Mammary epithelial cell (primary cell): ENCODE measurements at regions of chr4 and their contacts with region 1.

Region 1: DNA sequence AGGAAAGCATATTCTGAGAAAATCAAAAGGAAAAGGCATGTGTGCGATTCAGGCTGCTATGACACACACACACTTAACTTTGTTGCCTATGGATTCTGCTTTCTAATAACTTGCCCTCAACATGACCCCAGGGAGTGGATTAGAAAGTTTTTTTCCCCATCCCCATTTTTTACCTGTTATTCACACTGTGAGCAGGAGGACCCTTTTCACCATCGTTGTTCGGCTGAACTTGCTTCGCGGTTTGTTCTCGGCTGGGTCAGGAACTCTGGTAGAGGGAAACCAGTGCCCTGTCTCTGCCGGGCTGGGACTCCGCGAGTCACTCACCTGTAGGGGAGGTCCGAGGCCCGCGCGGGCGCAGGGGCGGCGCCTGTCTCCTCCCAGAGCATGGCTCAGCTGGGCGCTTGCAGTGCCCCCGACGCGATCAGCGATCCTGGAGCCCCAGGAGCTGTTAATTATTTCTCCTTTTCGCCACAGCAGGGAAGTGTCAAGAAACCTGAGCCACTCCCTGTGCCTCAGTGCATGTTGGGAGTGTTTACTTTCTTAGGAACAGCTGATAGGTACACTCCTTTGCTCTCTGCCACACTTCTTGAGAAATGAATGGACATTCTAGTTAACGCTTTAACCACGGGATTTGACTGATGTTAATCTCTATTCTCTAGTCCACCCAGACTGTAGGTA is at the start of gene RASSF6:
- DNase-seq: peak; percentile 91
- H3K4me3 ChIP-seq: peak within 1 kb of the TSS; percentile 62 to 84 (median 68)
- H3K27ac ChIP-seq: peak within 1 kb of the TSS; percentile 77
- H3K4me1 ChIP-seq: peaks cover 35% of the 10 kb centered on the region
- H3K27me3 ChIP-seq: no peaks in the 10 kb centered on the region
- CTCF ChIP-seq: peak in 1 of 2 donors; percentile 25
- total RNA-seq, gene RASSF6: 35.3 to 84.2 TPM

Region 2: GRCh38 chr4:73468170-73468569 is 152.1 kb before region 1 on chr4:
- CTCF ChIA-PET with region 1: no interaction called
- dilution Hi-C with region 1: no loop called
- in situ Hi-C with region 1: no loop called
- intact Hi-C with region 1: no loop called
- DNase-seq: no peak
- H3K4me3 ChIP-seq: no peak overlapping the region
- H3K27ac ChIP-seq: no peak overlapping the region
- H3K4me1 ChIP-seq: no peaks in the 10 kb centered on the region
- H3K27me3 ChIP-seq: peaks cover 11% of the 10 kb centered on the region
- CTCF ChIP-seq: no peak

Region 3: DNA sequence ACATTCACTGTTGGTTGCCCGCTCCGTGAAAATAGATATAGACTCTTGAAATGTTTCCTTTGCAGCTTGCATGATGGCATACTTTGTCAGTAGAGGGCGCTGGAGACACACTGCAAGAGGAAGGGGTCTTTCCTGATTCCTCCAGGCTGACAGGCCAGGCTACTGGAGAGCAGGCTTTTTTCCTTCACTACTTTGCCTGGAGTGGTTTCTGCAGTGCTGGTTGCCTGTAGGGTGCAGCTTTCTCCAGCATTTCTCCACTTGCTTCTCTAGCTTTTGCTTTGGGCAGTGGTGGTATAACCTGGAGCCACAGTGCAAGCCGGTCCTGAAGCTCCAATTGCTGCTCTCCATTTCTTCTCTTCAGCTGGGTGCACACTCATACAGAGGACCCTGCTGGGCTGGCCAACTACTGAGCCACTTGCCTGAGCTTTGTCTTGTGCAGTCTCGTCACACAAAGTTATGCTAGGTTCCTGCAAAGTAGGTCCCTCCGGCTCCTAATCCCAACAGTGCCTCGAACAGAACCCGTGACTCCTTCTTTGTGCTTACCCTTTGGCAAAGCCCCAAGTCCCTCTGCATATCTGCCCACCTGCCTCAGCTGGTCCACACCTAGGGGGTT is 46.4 kb before region 1 on chr4:
- CTCF ChIA-PET with region 1: no interaction called
- dilution Hi-C with region 1: no loop called
- in situ Hi-C with region 1: no loop called
- intact Hi-C with region 1: loop called (anchors 1 kb)
- DNase-seq: peak; percentile 52
- H3K4me3 ChIP-seq: no peak overlapping the region
- H3K27ac ChIP-seq: no peak overlapping the region
- H3K4me1 ChIP-seq: peaks cover 5% of the 10 kb centered on the region
- H3K27me3 ChIP-seq: no peaks in the 10 kb centered on the region
- CTCF ChIP-seq: peak; percentile 89

Region 4: DNA sequence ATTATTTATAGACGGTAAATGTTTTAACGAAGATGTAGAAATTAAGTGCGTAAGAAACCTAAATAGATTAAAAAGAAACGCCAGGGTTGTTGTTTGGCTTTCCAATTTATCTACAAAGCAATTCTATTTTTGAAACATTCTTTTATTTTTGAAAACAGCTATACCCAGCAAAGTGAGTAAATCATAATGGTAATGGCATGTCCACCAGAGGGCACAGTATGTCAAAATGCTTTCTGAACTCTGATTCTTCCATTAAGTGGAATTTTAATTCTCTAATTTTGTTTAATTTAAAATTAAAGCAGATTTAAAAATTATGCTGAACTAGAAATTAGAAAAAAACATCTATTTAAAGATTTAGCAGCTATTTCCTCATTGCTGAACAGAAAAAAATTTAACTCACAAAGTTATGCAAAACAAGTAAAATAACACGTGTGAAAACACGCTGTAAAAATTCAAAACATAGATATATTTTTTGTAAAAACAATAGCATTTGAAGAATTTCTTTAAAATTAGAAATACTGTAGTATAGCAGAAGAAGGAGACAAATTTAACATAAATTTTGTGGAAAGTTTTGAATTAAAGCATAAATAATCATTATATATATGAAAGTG is 26.5 kb before region 1 on chr4:
- CTCF ChIA-PET with region 1: interaction called, 4 read pairs
- dilution Hi-C with region 1: no loop called
- in situ Hi-C with region 1: no loop called
- intact Hi-C with region 1: loop called (anchors 1 kb)
- DNase-seq: no peak
- H3K4me3 ChIP-seq: no peak overlapping the region
- H3K27ac ChIP-seq: no peak overlapping the region
- H3K4me1 ChIP-seq: peaks cover 26% of the 10 kb centered on the region
- H3K27me3 ChIP-seq: no peaks in the 10 kb centered on the region
- CTCF ChIP-seq: peak; percentile 51 to 62

Region 5: DNA sequence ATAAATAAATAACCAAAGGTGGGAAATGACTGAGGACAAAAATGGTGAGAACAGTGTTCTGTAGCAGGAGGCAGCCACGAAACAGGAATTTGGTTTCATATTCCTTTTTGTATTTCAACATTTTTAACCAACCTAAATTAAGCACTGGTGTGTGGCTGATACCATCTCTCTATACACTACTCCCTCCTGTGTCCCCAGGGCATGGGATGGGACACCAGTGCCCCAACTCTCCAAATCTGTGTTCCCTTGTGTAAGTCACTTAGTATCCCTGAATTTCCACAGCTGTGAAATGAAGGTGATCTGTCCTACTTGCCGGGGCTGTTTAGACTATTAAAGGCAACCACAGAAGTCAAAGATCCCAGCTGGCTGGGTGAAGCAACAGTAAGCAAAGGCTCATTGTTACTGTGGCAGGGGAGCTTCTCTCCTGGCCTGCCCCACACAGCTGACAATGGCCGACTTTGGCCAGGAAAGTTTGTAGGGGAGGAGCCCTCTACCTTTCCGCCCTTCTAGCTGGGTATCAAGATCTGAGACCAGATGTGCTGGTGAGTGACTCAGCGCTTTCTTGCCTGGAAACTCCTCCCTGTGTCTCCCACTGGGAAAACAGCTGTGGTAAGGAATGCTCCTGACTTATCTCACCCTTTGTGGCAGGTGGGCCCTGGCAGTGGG is 21.2 kb before region 1 on chr4:
- CTCF ChIA-PET with region 1: no interaction called
- dilution Hi-C with region 1: no loop called
- in situ Hi-C with region 1: no loop called
- intact Hi-C with region 1: loop called (anchors 2 kb)
- DNase-seq: peak; percentile 96
- H3K4me3 ChIP-seq: peak overlapping the region in 1 of 3 experiments; percentile 4
- H3K27ac ChIP-seq: peak overlapping the region; percentile 63
- H3K4me1 ChIP-seq: peaks cover 22% of the 10 kb centered on the region
- H3K27me3 ChIP-seq: no peaks in the 10 kb centered on the region
- CTCF ChIP-seq: no peak

Region 6: DNA sequence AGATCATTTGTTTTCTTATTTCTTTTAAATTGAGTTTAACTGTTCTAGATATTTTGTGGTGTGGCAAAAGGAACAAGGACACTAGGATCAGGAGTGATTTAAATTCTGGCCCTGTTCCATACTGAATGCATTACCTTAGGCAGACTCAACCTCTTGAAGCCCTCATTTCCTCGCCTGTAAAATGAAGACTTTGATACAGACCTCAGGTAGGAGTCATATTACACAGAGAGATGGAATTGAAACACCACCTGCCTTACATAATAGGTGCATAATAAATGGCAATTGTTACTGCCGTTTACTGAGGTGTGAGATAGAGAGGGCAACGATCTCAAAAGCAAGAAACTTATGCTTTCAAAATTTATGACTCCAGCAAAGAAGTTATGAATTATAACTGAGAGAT is 28.2 kb after region 1 on chr4:
- CTCF ChIA-PET with region 1: interaction called, 5 read pairs
- dilution Hi-C with region 1: no loop called
- in situ Hi-C with region 1: no loop called
- intact Hi-C with region 1: loop called (anchors 1 kb)
- DNase-seq: no peak
- H3K4me3 ChIP-seq: no peak overlapping the region
- H3K27ac ChIP-seq: no peak overlapping the region
- H3K4me1 ChIP-seq: peaks cover 25% of the 10 kb centered on the region
- H3K27me3 ChIP-seq: no peaks in the 10 kb centered on the region
- CTCF ChIP-seq: no peak